ENCODE measurements at regions of chr22 and their contacts with region 1.

Region 1: GRCh38 chr22:22928666-22929380 is 41.2 kb downstream of the IGLL5 start:
- DNase-seq: peak; percentile 85
- H3K4me3 ChIP-seq: peak overlapping the region; percentile 33
- H3K27ac ChIP-seq: peak overlapping the region; percentile 91
- H3K4me1 ChIP-seq: peaks cover 100% of the 10 kb centered on the region
- CTCF ChIP-seq: no peak

Region 2: DNA sequence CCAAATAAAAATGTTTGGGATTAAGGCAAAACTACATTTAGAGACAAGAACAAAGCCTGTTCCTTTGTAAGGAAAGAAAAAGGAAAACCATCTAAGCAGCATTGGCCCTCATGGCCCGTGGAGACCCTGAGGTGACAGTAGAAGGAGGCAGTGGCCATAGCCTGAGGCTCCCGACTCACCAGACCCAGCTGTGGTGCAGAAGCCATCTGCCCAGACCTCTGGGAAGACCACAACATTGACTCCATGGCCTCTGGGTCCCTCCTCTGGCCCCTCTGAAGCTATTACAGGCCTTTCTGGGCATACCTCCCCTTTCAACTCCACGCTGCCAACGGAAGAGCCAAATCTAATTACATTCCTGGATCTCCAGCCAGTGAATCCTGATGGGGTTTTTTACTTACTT is 376.2 kb before region 1 on chr22:
- CTCF ChIA-PET with region 1: no interaction called
- POLR2A ChIA-PET with region 1: no interaction called
- intact Hi-C with region 1: no loop called
- DNase-seq: peak; percentile 58
- H3K4me3 ChIP-seq: no peak overlapping the region
- H3K27ac ChIP-seq: no peak overlapping the region
- H3K4me1 ChIP-seq: no peaks in the 10 kb centered on the region
- CTCF ChIP-seq: peak; percentile 56

Region 3: GRCh38 chr22:22893077-22893805 is 35.6 kb before region 1 on chr22:
- CTCF ChIA-PET with region 1: interaction called, 3 read pairs
- POLR2A ChIA-PET with region 1: interaction called, 308 read pairs
- intact Hi-C with region 1: loop called (anchors 1 kb)
- DNase-seq: peak; percentile 57
- H3K4me3 ChIP-seq: peak overlapping the region; percentile 87
- H3K27ac ChIP-seq: peak overlapping the region; percentile 81
- H3K4me1 ChIP-seq: peaks cover 66% of the 10 kb centered on the region
- CTCF ChIP-seq: no peak

Region 4: DNA sequence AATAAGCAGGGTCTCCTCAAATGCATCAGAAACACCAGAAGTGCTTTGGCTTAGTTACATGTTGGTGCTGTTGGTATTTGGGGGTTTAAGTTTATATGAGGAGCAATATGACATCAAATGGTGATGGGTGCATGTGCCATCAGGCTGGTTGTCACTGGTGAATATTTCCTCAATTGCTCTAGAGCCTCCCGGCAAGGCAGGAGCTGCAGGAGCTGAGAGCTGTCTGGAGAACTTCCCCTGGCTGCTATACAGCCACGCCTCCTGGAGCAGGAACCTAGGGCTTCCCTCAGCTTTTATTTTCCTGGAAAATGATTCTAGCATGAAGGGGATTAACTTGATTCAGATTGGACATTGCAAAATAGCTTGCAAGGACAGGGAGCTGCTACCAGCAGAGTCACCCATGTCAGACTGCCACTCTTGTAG is 25.5 kb before region 1 on chr22:
- CTCF ChIA-PET with region 1: no interaction called
- POLR2A ChIA-PET with region 1: interaction called, 93 read pairs
- intact Hi-C with region 1: no loop called
- DNase-seq: no peak
- H3K4me3 ChIP-seq: no peak overlapping the region
- H3K27ac ChIP-seq: peak overlapping the region; percentile 39
- H3K4me1 ChIP-seq: peaks cover 58% of the 10 kb centered on the region
- CTCF ChIP-seq: no peak

Region 5: GRCh38 chr22:22913989-22914388 is 14.8 kb before region 1 on chr22:
- CTCF ChIA-PET with region 1: interaction called, 3 read pairs
- POLR2A ChIA-PET with region 1: interaction called, 5 read pairs
- intact Hi-C with region 1: loop called (anchors 1 kb)
- DNase-seq: peak; percentile 79
- H3K4me3 ChIP-seq: peak overlapping the region; percentile 16
- H3K27ac ChIP-seq: peak overlapping the region; percentile 41
- H3K4me1 ChIP-seq: peaks cover 51% of the 10 kb centered on the region
- CTCF ChIP-seq: no peak

Region 6: DNA sequence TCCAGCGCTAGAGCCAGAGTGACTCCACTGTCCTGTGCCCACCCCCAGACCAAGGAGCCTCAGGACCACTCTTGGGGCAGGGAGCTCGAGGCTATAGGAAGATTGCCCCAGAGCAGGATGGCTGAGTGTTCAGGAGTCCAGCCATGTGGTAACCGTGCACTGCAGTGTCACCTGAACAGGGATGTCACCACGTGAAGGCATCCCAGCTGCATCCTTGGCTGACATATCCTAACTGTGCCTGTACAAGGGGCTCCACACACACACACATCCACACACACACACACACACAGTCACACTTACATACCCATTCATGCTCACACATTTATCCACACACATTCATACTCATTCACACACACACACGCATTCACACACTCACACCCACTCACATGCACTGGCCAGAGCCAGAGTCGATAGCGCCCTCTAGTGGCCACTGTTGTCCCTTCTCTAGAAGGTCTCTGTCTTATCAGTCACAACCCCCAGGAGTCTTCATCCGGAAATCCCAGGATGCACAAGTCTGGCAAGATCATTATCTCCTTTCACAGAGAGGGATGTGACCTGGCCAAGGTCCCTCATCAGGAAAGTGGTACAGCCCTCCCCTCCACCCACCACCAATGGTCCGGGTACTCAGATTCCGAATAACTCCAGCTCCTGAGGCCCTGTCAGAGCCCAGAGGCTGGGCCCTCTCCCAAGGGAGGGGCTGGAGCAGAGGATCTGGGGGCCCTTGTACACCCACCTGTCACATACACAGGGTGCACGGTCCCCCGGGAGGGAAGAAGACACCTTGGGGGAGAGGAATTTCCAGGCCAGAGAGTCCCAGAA is 13.9 kb after region 1 on chr22:
- CTCF ChIA-PET with region 1: interaction called, 12 read pairs
- POLR2A ChIA-PET with region 1: interaction called, 47 read pairs
- intact Hi-C with region 1: loop called (anchors 1 kb)
- DNase-seq: peak; percentile 89
- H3K4me3 ChIP-seq: peak overlapping the region; percentile 14
- H3K27ac ChIP-seq: peak overlapping the region; percentile 90
- H3K4me1 ChIP-seq: peaks cover 93% of the 10 kb centered on the region
- CTCF ChIP-seq: peak; percentile 98

Measured in OCI-LY7 (cell line).